ENCODE measurements at regions of chr9 and their contacts with region 1.

Region 1: DNA sequence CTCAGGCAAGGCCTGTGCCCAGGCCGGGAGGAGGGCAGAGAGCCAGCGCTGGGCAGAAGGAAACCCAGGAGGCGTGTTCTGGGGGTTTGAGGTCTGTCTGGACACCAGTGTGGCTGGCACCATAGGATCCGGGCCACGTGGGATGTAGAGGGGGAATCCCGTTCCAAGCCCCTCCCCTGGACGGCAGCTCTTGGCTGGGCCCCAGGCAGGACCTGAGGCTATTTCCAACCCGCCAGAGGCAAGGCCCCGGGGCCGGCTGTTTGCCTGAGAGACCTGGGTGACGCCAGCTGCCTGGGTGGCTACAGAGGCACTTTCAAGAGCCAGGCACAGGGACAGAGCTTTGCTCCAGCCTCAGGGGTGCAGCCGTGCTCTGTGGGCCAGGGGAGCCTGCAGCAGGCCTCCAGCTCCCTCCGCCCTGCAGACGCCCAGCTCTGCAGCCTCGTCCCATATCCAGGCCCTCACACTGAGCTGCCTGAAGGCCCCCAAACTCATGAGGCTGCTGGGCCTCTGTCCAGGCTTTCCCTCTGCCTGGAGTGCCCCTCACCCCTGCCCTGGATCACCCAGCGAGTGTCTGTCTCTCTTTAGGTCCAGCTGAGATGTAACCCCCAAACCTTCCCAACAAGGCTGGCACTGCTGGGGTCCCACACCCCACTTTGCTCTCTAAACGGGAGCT is 56.6 kb upstream of the EGFL7 start:
- DNase-seq: no peak
- H3K4me3 ChIP-seq: no peak overlapping the region
- H3K27ac ChIP-seq: no peak overlapping the region
- H3K4me1 ChIP-seq: peaks cover 0 to 32% (median 15%) of the 10 kb centered on the region in 4 experiments; a peak in 5 of 7 replicates
- H3K27me3 ChIP-seq: 0 out of 7 replicates have a peak, but pooled peaks cover 0 to 2% (median 0%) of the 10 kb centered on the region in 4 experiments
- CTCF ChIP-seq: no peak
- EP300 ChIP-seq: no peak
- POLR2A ChIP-seq: no peak
- RAD21 ChIP-seq: no peak

Region 2: GRCh38 chr9:136564379-136564988 is 41.6 kb before region 1 on chr9:
- CTCF ChIA-PET with region 1: interaction called, 10 read pairs
- POLR2A ChIA-PET with region 1: no interaction called
- DNase-seq: no peak
- H3K4me3 ChIP-seq: no peak overlapping the region
- H3K27ac ChIP-seq: no peak overlapping the region
- H3K4me1 ChIP-seq: peaks cover 0 to 44% (median 27%) of the 10 kb centered on the region in 4 experiments; a peak in 6 of 7 replicates
- H3K27me3 ChIP-seq: peaks cover 0 to 4% (median 0%) of the 10 kb centered on the region in 4 experiments; a peak in 1 of 7 replicates
- CTCF ChIP-seq: peak in 1 of 3 experiments; percentile 0; a peak in 1 of 4 replicates
- EP300 ChIP-seq: no peak
- POLR2A ChIP-seq: no peak
- RAD21 ChIP-seq: no peak

Region 3: GRCh38 chr9:136587145-136587943 is 18.8 kb before region 1 on chr9:
- CTCF ChIA-PET with region 1: interaction called, 9 read pairs
- POLR2A ChIA-PET with region 1: interaction called, 28 read pairs
- DNase-seq: peak in 1 of 2 experiments; percentile 85
- H3K4me3 ChIP-seq: peak overlapping the region in 3 of 4 experiments; percentile 32 to 53 (median 36); a peak in 6 of 8 replicates
- H3K27ac ChIP-seq: 0 out of 2 replicates have a peak overlapping the region, but pooled peaks have one; percentile 56
- H3K4me1 ChIP-seq: peaks cover 3 to 48% (median 36%) of the 10 kb centered on the region in 4 experiments
- H3K27me3 ChIP-seq: no peaks in the 10 kb centered on the region
- CTCF ChIP-seq: no peak
- EP300 ChIP-seq: 0 out of 3 replicates have a peak, but pooled peaks of 1 of the 2 experiments have one; percentile 40
- POLR2A ChIP-seq: no peak
- RAD21 ChIP-seq: no peak; a peak in 1 of 4 replicates

Measured in H1 (cell line).